Cardiac septum (tissue), 1 donor: ENCODE measurements at regions of chr4 and their contacts with region 1.

Region 1: DNA sequence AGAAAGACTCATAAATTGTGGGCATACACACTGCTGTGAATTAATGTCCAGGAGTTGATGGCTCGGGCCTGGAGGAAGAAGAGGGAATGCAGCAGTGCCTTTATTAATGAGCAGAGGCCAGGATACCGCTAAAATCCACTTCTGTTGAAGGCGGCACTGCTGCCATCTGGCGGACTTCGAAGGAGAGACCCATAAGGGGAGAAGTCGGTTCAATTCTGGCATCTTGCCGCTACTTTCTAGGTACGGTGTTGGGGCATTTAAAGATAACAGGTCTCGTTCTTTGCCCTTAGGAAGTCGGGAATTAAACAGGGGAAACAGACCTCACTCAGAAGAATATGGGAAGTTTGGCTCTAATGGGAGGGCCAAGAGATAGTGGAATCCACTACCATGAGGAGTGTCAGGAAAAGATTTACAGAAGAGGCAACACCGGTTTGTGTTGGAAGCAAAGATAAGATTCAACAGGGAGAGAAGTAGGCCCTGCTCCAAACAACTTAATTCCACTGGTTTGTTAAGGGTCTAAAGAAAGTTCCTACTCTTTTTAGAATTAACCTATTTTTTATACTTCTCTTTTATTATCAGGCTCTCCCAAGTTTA is 133.6 kb upstream of the GIMD1 start:
- DNase-seq: no peak

Region 2: GRCh38 chr4:106266201-106266600 is 236.0 kb before region 1 on chr4:
- intact Hi-C with region 1: loop called (anchors 10 kb)
- DNase-seq: no peak

Region 3: GRCh38 chr4:106329041-106329618 is 173.1 kb before region 1 on chr4:
- intact Hi-C with region 1: loop called (anchors 5 kb)
- DNase-seq: no peak

Region 4: DNA sequence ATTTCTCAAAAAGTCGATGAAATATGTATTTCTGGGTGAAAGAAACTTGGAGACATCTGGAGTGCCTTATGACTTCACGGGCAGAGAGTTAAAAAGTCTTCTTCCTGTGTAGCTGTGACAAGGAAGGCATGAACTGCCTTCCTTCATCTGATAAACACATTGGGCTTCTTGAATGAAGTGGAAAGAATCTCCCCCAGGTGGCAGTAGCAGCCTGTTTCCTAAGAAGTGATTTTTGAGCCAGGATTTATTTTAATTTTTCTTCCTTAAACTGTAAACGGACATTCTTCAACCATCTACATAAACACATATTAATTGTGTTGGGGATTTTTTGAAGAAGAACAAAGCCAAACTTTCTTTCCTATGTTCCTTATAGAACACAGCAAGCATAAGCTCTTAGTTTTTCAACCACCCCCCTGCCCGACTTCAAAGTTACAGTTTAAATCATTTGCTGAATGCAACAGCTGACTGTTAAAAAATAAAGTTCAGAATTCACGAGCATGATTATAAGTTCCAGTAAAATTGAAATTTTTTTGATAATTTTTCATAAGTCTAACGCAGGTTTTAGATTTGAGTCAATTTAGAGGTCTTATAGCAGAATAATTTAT is 132.6 kb before region 1 on chr4:
- intact Hi-C with region 1: loop called (anchors 5 kb)
- DNase-seq: no peak